ENCODE measurements at regions of chr13 and their contacts with region 1.

Region 1: GRCh38 chr13:99307648-99308339 is 595 bp upstream of the GPR183 start:
- DNase-seq: no peak
- H3K4me3 ChIP-seq: no peak overlapping the region
- H3K27ac ChIP-seq: peak overlapping the region; percentile 3 to 9
- H3K4me1 ChIP-seq: peaks cover 7% of the 10 kb centered on the region
- H3K27me3 ChIP-seq: no peaks in the 10 kb centered on the region
- CTCF ChIP-seq: no peak
- EP300 ChIP-seq: no peak
- POLR2A ChIP-seq: no peak

Region 2: DNA sequence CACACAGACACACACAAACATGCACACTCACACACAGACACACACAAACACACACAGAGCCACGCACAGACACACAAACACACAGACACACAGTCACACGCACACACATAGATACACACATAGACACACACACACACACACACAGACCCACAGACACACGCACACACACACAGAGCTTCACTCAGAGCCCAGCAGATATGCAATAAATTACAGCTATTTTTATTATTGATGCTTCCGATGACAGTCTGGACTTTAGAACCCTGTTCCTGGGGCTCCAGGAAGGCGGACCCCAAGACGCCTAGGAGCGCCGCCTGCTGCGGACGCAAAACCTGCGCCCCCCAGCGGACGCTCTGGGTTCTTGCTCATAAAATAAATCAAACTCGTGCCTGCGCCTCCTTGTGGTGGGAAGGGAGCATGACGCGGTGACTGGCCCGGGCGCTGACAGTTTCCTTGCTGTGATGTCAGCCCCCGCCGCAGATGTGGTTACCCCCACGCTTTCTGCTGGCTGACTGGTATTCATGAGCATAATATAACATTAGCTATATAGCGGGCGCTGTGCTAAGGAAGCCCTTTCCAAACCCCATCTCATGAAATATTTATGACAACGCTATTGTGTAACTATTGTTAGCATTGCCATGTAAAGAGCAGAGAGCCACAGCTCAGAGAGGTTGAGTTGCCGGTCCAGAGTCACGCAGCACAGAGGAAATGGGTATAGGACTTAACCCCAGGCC is 129.1 kb after region 1 on chr13:
- intact Hi-C with region 1: loop called in 1 of 4 experiments (anchors 10 kb)
- DNase-seq: peak; percentile 78 to 91 (median 87)
- H3K4me3 ChIP-seq: no peak overlapping the region
- H3K27ac ChIP-seq: no peak overlapping the region
- H3K4me1 ChIP-seq: peaks cover 9% of the 10 kb centered on the region
- H3K27me3 ChIP-seq: no peaks in the 10 kb centered on the region
- CTCF ChIP-seq: peak; percentile 99
- EP300 ChIP-seq: no peak
- POLR2A ChIP-seq: no peak